PC-9 (cell line): ENCODE measurements at regions of chrX and their contacts with region 1.

Region 1: GRCh38 chrX:115393271-115393670 is 103.8 kb downstream of the LUZP4 start:
- DNase-seq: peak; percentile 29 to 97
- H3K4me3 ChIP-seq: no peak overlapping the region
- H3K27ac ChIP-seq: peak overlapping the region; percentile 69
- H3K4me1 ChIP-seq: peaks cover 32% of the 10 kb centered on the region
- H3K27me3 ChIP-seq: no peaks in the 10 kb centered on the region
- CTCF ChIP-seq: no peak

Region 2: GRCh38 chrX:115344885-115345614 is 48.2 kb before region 1 on chrX:
- CTCF ChIA-PET with region 1: interaction called, 3 read pairs
- POLR2A ChIA-PET with region 1: interaction called, 4 read pairs
- intact Hi-C with region 1: loop called (anchors 1 kb)
- DNase-seq: peak; percentile 87 to 91
- H3K4me3 ChIP-seq: 0 out of 2 replicates have a peak overlapping the region, but pooled peaks have one; percentile 21
- H3K27ac ChIP-seq: peak overlapping the region; percentile 75
- H3K4me1 ChIP-seq: peaks cover 17% of the 10 kb centered on the region
- H3K27me3 ChIP-seq: no peaks in the 10 kb centered on the region
- CTCF ChIP-seq: no peak

Region 3: GRCh38 chrX:115372152-115372551 is 21.1 kb before region 1 on chrX:
- CTCF ChIA-PET with region 1: no interaction called
- POLR2A ChIA-PET with region 1: no interaction called
- intact Hi-C with region 1: loop called (anchors 2 kb)
- DNase-seq: peak; percentile 33 to 82
- H3K4me3 ChIP-seq: no peak overlapping the region
- H3K27ac ChIP-seq: peak overlapping the region; percentile 32
- H3K4me1 ChIP-seq: peaks cover 15% of the 10 kb centered on the region
- H3K27me3 ChIP-seq: no peaks in the 10 kb centered on the region
- CTCF ChIP-seq: no peak